ENCODE measurements at regions of chr17 and their contacts with region 1.

Region 1: GRCh38 chr17:50094753-50095619 is at the start of gene PDK2:
- DNase-seq: peak; percentile 99
- ATAC-seq: peak; percentile 95
- total RNA-seq, gene PDK2: 260 TPM

Region 2: GRCh38 chr17:49880291-49881053 is 214.5 kb before region 1 on chr17:
- intact Hi-C with region 1: loop called (anchors 5 kb)
- DNase-seq: no peak
- ATAC-seq: peak; percentile 90

Region 3: GRCh38 chr17:50060951-50061692 is 33.9 kb before region 1 on chr17:
- intact Hi-C with region 1: loop called (anchors 2 kb)
- DNase-seq: peak; percentile 86
- ATAC-seq: peak; percentile 77

Region 4: DNA sequence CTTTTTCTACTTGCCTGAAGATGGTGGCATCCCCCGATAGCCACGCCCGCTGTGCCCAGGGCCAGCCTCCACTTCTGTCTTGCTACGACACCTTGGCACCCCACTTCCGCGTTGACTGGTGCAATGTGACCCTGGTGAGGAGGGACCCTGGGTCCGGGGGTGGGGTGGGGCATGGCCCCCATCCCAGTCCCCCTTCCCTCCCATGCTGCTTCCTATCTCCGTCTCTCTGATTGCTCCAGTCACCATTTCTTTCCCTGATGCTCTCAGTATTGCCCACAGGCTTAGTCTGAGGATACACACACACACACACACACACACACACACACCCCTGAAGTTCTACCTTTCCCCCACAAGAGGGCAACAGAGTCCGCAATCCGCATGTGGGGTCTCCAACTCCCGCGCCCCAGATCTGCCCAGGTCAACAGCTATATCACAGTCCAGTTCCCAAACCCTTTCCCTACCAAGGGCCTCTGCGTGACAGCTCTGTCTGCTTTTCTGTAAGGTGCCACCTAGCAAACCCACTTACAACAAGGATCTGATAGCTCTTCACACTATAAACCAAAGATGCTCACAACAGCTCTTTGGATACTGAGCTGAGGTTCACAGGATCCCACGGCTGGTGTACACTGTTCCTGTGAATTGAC is 74.3 kb after region 1 on chr17:
- intact Hi-C with region 1: loop called (anchors 5 kb)
- DNase-seq: peak; percentile 72
- ATAC-seq: peak; percentile 11

Region 5: GRCh38 chr17:50189550-50190292 is 94.7 kb after region 1 on chr17:
- intact Hi-C with region 1: no loop called
- DNase-seq: no peak
- ATAC-seq: no peak

Region 6: DNA sequence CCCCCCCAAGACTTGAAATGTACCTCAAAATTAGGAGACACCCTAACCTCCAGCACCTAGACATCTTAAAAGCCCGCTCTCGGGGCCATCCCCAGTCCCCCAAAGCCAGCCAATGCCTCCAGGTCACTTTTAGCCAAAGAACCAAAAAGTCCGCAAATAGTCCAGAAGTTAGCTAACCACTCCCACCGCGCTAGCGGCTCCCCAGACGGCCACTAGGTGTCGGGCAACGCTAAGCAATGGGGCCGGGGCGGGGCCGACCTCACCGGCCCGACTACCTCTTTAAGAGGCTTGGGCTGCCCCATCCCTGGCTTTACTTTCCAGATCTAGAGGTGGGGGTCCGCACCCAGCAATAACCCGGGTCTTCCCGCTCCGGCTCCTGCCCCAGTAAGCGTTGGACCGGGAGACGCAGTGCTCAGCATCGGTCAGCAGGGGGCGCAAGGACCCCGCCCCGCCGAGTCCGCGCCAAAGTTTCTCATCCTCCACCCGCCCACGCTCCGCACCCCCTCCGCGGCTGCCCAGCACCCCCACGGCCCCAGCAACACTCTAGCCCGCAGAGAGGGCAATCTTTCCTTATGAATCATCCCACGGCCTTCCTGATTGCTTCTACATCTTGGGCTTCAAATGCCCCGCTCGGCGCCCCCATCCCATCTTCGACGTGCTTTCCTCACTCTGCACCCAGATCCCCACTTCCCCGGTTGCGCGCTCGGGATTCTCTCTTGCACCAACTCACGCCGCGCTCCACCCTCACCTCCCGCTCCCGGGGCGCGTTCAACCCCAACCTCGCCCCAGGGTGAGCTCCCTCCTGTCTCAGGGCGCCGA is 105.7 kb after region 1 on chr17:
- intact Hi-C with region 1: loop called (anchors 1 kb)
- DNase-seq: peak; percentile 94
- ATAC-seq: peak; percentile 82

Region 7: GRCh38 chr17:50297407-50297865 is 202.4 kb after region 1 on chr17:
- intact Hi-C with region 1: loop called (anchors 2 kb)
- DNase-seq: peak; percentile 88
- ATAC-seq: peak; percentile 86